ENCODE measurements at regions of chr5 and their contacts with region 1.

Region 1: GRCh38 chr5:177454397-177455035 is 7.9 kb downstream of the PRR7 start:
- DNase-seq: peak; percentile 93
- ATAC-seq: peak; percentile 69 to 74

Region 2: DNA sequence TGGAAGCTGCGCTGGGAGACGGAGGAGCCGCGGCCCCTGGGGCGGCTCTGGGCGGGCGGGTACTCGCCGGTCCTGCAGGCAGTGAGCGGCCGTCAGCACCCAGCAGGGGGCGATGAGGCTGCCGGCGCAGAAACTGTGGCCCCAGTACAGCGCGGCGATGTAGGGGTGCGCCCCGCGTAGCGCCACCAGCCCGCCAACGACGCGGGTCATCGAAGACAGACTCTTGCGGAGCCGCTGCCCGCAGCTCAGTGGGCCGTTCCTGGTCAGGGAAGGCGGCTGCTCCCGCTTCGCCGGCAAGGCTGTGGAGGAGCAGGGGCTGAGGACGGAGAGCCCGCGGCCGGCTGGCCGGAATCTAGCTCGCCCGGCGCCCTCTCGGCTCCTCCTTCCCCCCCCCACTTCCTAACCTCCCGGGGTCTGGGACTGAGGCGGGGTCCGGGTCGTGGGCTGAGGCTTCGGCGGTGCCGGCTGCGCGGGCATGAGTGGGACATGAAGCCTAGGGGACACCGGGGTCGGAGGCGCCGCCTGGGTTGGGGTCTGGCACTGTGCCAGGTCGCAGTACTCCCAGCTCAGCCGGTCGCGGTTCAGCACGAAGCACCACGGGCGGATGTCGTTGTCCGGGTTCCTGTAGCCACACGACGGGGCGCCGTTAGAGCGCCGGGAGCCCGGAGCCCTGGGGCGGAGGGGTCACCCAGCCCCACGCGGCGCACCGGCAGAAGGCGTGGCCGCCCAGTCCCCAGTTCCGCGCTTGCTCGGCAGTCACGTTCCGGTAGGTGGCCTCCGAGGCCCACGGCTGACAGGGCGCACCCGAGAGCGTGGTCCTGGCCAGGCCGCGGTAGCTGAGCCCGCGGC is 50.5 kb before region 1 on chr5:
- intact Hi-C with region 1: loop called (anchors 1 to 5 kb)
- DNase-seq: peak; percentile 91
- ATAC-seq: peak; percentile 92 to 95

Region 3: DNA sequence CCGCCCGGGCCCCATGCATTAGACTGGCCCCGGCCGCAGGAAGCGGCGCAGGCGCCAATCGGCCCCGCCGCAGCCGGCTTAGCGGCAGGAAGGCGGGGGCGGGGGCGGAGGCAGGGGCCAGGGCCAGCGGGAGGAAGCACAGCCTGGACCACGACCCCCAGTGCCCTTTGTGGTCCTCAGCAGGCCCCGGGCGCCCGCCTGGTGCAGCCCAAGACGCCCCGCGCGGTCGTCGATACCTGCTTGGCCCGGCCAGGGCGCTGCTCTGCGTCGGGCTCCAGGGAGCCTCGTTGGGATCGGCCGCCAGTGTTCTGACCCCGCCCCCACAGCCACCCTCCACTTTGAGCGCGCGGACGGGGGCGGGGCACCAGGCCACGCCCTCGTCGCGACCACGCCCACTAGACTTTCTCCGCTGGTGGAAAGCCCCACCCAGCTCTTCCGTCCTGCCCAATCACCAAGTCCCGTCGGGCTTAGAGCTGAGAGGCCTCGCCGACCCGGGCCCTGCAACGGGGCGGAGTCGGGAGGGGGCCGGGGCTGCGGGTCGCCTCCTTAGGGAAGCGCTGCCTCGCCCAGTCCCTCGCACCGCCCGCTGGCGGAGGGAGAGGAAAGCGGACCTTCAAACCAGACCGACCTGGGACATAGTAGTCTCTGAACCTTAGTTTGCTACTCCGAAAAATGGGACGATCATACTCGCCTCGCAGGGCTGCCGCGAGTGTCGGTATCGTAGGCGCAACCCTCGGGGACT is 42.9 kb after region 1 on chr5 and contains the start of gene PDLIM7:
- intact Hi-C with region 1: loop called (anchors 2 kb)
- DNase-seq: peak; percentile 96
- ATAC-seq: peak; percentile 80 to 87
- total RNA-seq, gene PDLIM7: 50.5 to 94.5 TPM